ENCODE measurements at regions of chr17 and their contacts with region 1.

Region 1: DNA sequence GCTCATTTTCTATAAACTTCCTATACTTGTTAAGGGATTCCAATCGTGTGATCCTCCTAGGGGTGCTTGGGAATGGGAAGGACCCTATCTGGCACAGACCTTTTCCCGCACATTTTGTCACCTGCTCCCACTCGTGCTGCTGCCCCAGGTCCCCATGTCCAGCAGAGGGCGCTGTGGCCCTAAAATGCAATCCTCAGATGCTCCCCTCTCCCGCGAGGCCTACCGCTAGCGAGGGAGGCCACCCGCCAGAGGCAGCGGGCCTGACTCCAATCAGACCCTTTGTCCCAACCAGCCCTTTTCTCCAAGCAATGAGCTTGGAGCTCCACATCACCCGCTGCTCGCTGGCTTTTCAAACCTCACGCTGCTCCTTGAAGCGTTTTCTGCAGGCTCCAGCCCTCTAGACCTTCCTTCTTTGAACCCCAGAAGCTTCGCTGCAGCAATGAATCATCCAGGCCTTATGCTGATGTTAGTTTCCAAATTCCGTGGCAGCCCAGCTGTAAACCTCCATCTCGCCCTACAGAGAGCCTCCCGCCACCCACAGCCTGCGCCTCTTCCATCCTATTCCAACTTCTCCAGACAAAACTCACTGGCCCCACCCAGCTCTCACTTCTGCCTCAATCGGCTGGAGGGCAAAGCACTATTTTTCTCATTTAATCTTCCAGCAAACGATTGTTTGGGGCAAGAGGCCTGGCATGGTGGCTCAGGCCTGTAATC is 23.6 kb upstream of the FZD2 start:
- DNase-seq: peak; percentile 52
- H3K4me3 ChIP-seq: no peak overlapping the region
- H3K27ac ChIP-seq: no peak overlapping the region
- H3K4me1 ChIP-seq: no peaks in the 10 kb centered on the region
- H3K27me3 ChIP-seq: no peaks in the 10 kb centered on the region
- CTCF ChIP-seq: peak; percentile 91 to 97

Region 2: GRCh38 chr17:44432254-44433157 is 101.2 kb before region 1 on chr17:
- CTCF ChIA-PET with region 1: no interaction called
- dilution Hi-C with region 1: no loop called
- in situ Hi-C with region 1: no loop called
- intact Hi-C with region 1: no loop called
- DNase-seq: no peak
- H3K4me3 ChIP-seq: no peak overlapping the region
- H3K27ac ChIP-seq: no peak overlapping the region
- H3K4me1 ChIP-seq: no peaks in the 10 kb centered on the region
- H3K27me3 ChIP-seq: no peaks in the 10 kb centered on the region
- CTCF ChIP-seq: no peak

Region 3: GRCh38 chr17:44464037-44464436 is 69.7 kb before region 1 on chr17:
- CTCF ChIA-PET with region 1: no interaction called
- dilution Hi-C with region 1: loop called (anchors 5 kb)
- in situ Hi-C with region 1: no loop called
- intact Hi-C with region 1: no loop called
- DNase-seq: peak; percentile 24
- H3K4me3 ChIP-seq: no peak overlapping the region
- H3K27ac ChIP-seq: no peak overlapping the region
- H3K4me1 ChIP-seq: no peaks in the 10 kb centered on the region
- H3K27me3 ChIP-seq: no peaks in the 10 kb centered on the region
- CTCF ChIP-seq: no peak

Region 4: DNA sequence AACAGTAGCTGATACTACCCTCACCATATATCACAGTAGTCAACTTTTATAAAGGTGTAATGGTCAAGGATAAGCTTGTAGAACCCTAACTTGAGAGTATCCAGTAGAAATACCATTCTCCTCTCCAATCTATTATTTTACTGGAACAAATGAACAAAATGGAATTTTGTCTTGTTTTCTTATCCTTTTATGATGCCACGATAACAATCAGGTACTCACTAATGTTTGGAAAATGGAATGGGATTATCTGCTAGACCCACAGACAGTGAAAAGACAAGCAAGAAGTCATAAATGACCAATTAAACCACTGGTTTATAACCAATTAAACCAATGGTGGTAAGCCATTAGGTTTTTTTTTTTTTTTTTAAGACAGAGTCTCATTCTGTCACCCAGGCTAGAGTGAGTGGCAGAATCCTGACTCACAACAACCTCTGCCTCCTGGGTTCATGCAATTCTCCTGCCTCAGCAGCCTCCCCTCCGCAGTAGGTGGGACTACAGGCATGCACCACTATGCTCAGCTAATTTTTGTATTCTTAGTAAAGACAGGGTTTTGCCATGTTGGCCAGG is 40.9 kb before region 1 on chr17:
- CTCF ChIA-PET with region 1: no interaction called
- dilution Hi-C with region 1: loop called (anchors 5 kb)
- in situ Hi-C with region 1: no loop called
- intact Hi-C with region 1: no loop called
- DNase-seq: no peak
- H3K4me3 ChIP-seq: no peak overlapping the region
- H3K27ac ChIP-seq: no peak overlapping the region
- H3K4me1 ChIP-seq: no peaks in the 10 kb centered on the region
- H3K27me3 ChIP-seq: no peaks in the 10 kb centered on the region
- CTCF ChIP-seq: no peak

Region 5: DNA sequence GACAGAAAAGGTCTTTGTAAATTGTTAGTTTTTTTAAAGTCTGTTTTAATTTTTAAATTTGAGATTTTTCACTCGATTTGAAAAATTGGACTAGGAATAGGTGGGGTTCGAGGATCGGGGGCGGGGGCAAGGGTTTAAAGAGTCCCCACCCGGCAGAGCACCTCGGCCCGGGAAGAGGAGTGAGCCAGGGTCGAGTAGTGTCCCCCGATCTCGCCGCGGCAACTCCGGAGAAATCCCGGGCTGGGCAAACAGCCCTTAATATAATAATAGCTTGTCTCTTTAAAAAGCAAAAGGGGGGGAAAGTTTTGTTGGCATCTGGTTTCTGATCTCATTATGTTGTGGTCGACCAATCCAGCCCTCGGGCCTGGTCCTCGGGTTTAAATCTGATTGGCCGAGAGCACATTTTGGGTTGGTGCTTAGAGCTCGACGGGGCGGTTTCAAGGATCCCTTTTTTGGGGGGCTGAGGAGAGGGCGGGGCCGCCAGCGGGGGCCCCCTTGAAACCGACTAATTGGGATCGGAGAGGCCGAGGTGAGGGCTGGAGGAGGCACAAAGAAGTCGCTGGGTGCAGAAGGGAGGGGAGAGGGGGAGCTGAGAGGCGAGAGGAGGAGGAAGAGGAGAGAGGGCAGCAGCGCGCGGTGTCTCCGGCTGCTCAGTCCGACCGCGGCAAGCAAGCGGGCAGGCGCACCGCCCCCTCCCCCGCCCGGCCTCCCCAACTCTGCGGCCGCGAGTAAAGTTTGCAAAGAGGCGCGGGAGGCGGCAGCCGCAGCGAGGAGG is 23.3 kb after region 1 on chr17 and contains the start of gene FZD2:
- CTCF ChIA-PET with region 1: no interaction called
- dilution Hi-C with region 1: no loop called
- in situ Hi-C with region 1: no loop called
- intact Hi-C with region 1: loop called (anchors 2 kb)
- DNase-seq: peak; percentile 93
- H3K4me3 ChIP-seq: peak within 1 kb of the TSS; percentile 62 to 99 (median 67)
- H3K27ac ChIP-seq: peak within 1 kb of the TSS; percentile 61
- H3K4me1 ChIP-seq: peaks cover 14% of the 10 kb centered on the region
- H3K27me3 ChIP-seq: no peaks in the 10 kb centered on the region
- CTCF ChIP-seq: no peak
- total RNA-seq, gene FZD2: 1.8 to 4.5 TPM

Region 6: DNA sequence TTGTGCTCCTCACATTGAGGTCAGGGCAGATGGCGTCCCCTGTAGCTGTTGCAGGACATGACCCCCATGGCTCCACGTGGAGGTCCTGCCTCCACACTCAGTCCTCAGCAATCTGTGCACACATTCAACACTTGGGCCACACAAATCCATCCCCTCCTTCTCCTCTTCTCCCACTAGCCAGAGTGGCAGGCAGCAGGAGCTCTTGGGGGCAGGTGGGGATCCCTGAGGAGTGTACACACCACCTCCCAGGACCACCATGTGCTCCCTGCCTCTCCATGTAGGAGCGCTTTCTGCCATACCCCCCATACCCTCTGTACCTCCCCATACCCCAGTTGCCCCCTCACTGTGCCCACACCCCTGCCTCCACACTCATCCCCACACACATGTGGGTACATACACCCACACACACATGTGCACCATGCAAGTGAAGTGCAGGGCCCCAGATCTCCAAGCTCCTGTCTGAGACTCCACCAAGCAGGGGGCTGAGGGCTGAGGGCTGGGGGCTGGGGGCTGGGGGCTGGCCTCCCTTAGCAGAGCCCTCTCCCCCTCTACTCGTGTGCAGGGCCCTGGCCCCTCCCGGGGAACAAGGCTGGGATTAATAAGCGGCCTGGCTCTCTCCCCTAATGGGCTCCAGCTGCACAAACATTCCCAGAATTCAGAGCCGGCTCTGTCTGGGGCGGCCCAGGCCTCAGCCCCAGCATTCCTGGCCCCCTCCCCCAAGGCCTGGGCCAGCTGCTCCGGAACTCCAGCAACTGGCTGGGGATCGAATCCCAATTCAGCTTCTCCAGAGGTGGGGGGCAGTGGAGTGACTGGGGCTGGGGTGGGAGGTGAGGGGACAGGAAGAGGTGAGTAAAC is 74.4 kb after region 1 on chr17:
- CTCF ChIA-PET with region 1: no interaction called
- dilution Hi-C with region 1: no loop called
- in situ Hi-C with region 1: no loop called
- intact Hi-C with region 1: no loop called
- DNase-seq: no peak
- H3K4me3 ChIP-seq: no peak overlapping the region
- H3K27ac ChIP-seq: no peak overlapping the region
- H3K4me1 ChIP-seq: no peaks in the 10 kb centered on the region
- H3K27me3 ChIP-seq: no peaks in the 10 kb centered on the region
- CTCF ChIP-seq: no peak

Region 7: DNA sequence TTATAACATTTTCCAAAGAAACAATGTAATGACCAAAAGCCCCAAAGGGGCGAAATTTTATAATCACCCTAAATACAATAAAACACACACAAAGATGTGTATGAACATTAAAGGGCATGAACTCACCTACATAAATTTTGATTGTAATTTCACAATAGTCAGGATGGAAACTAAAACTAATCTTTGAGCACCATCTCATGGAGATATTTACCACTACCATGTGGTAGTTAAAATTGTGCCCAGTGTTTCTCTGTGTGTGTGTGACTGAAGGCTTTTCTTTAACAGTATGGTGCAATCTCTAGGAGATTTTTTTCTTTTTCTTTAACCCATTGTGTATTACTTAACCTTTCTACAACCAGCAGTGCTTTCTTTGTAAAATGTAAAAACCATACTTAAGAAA is 102.9 kb after region 1 on chr17:
- CTCF ChIA-PET with region 1: no interaction called
- dilution Hi-C with region 1: no loop called
- in situ Hi-C with region 1: loop called (anchors 10 kb)
- intact Hi-C with region 1: loop called (anchors 1 kb)
- DNase-seq: peak; percentile 12
- H3K4me3 ChIP-seq: no peak overlapping the region
- H3K27ac ChIP-seq: no peak overlapping the region
- H3K4me1 ChIP-seq: no peaks in the 10 kb centered on the region
- H3K27me3 ChIP-seq: no peaks in the 10 kb centered on the region
- CTCF ChIP-seq: peak; percentile 28 to 54

Region 8: DNA sequence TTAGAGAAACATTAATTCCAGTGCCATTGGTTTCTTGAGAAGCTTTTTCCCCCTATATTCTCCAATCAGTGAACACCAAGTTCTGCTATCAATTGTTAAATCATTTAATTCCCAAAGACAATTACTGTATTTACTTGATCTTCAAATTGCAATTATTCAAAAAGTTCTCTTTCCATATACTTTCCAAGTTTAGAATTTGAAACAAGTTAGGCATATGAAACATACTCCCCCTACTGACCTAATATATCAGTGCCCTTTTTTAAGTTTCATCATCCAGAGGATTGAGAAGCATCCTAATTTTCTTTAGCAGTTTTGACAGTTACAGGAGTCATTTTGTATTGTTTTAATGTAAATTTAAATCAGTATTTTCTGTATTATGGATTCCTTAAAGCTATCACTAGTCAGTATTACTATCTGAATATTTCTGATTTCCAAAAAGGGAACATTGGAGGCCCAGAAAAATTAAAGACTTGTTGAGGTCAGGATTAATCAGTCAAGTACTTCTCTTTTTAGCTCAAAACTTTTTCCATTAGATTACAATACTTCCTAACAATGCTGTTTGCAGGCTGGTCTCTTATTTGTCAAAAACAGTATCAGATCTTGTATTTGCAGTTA is 138.9 kb after region 1 on chr17:
- CTCF ChIA-PET with region 1: interaction called, 6 read pairs
- dilution Hi-C with region 1: no loop called
- in situ Hi-C with region 1: loop called in 1 of 2 experiments (anchors 10 kb)
- intact Hi-C with region 1: loop called (anchors 1 kb)
- DNase-seq: no peak
- H3K4me3 ChIP-seq: no peak overlapping the region
- H3K27ac ChIP-seq: no peak overlapping the region
- H3K4me1 ChIP-seq: no peaks in the 10 kb centered on the region
- H3K27me3 ChIP-seq: no peaks in the 10 kb centered on the region
- CTCF ChIP-seq: peak; percentile 63 to 68